ENCODE measurements at regions of chr6 and their contacts with region 1.

Region 1: GRCh38 chr6:10478187-10479040 is 42.7 kb upstream of the GCNT2 start:
- DNase-seq: peak in 1 of 2 donors; percentile 59
- H3K4me3 ChIP-seq: no peak overlapping the region
- H3K27ac ChIP-seq: no peak overlapping the region
- H3K4me1 ChIP-seq: peaks cover 0 to 3% (median 0%) of the 10 kb centered on the region in 4 donors
- H3K27me3 ChIP-seq: no peaks in the 10 kb centered on the region
- CTCF ChIP-seq: peak in 5 of 7 experiments; percentile 51 to 80 (median 63)
- EP300 ChIP-seq: no peak
- POLR2A ChIP-seq: no peak

Region 2: GRCh38 chr6:10248378-10248891 is 230.0 kb before region 1 on chr6:
- intact Hi-C with region 1: no loop called
- DNase-seq: no peak
- H3K4me3 ChIP-seq: no peak overlapping the region
- H3K27ac ChIP-seq: no peak overlapping the region
- H3K4me1 ChIP-seq: no peaks in the 10 kb centered on the region
- H3K27me3 ChIP-seq: peaks cover 0 to 4% (median 0%) of the 10 kb centered on the region in 3 donors
- CTCF ChIP-seq: no peak
- EP300 ChIP-seq: no peak
- POLR2A ChIP-seq: no peak

Region 3: DNA sequence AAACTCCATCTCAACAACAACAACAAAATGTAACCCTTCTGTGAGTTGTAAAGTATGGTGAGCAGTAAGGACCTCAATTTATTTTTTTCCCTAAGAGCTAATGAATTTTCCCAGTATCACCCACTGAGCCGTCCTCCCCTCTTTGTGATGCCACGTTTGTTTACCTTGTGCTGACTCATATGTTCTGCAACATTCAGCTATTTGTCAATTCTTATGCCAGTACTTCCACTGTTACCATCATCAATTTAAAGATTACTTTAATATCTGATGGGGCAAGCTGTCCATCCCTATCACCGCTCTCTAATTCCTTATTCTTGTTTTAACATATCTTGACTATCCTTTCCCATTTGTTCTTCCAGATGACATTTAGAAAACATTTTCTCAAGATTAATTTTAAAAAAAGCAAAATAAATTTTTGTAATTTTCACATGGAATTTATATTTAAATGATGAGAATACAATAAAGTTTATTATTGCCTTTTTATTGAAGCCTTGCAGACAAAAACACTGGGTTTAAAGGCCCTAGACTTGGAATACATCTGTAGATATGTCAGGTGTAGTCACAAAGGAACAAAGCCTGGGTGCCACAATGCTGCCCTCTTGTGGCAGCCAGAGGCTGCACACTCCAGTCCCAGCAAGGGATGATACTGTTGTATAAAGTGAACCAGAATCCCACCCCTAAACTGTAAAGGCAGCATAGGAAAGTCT is 322.6 kb after region 1 on chr6:
- intact Hi-C with region 1: loop called (anchors 5 kb)
- DNase-seq: peak; percentile 63 to 85
- H3K4me3 ChIP-seq: no peak overlapping the region
- H3K27ac ChIP-seq: no peak overlapping the region
- H3K4me1 ChIP-seq: no peaks in the 10 kb centered on the region
- H3K27me3 ChIP-seq: no peaks in the 10 kb centered on the region
- CTCF ChIP-seq: peak in 5 of 7 experiments; percentile 74 to 98 (median 95)
- EP300 ChIP-seq: no peak
- POLR2A ChIP-seq: no peak

Measured in stomach (tissue), 19 donors.